PC-3 (cell line): ENCODE measurements at regions of chr1 and their contacts with region 1.

Region 1: DNA sequence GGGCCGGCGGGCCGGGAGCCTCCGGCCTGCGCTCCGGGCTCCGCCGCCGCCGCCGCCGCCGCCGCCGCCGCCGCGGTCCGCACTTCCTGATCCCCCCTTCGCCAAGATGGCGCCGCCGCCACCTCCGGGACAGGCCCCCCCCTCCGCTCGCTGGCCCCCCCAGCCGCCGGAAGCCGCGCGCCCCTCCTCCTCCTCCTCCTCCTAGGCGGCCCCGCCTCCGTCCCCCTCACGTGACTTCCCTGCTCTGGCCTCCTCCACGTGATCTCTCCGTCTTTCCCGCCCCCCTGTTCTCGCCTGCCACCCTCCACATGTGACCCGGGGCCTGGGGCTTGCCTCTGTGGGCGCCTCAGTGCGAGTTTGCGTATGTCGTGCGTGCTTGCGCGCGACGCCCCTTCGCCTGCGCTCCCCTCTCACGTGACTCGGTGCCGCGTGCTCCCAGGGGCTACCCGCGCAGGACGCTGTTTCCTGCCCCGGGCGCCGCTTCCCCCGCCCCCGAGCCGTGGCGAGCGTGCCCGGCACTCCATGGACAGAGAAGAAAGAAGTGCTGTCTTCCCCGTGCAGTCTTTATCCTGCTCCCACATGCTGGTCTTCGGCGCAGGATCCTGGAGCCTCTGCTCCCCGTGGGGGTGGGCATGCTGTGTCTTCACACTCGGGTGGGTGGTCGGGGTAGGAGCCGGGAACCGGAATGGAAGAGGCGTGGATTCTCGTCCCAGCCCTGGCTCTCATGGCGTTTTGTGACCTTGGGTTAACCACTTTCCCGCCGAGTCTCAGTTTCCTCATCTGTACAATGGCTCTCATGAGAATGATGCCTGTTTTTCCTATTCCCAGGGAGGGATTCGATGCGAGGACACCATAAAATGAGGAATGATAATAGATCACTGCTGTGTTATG is at the start of gene UBE2Q1:
- DNase-seq: peak; percentile 97
- ATAC-seq: peak; percentile 90
- H3K4me3 ChIP-seq: peak within 1 kb of the TSS; percentile 80
- H3K27ac ChIP-seq: peak within 1 kb of the TSS; percentile 74
- H3K4me1 ChIP-seq: peaks cover 24% of the 10 kb centered on the region
- H3K27me3 ChIP-seq: no peaks in the 10 kb centered on the region
- CTCF ChIP-seq: no peak
- total RNA-seq, gene UBE2Q1: 40.0 and 66.6 TPM in 2 replicates

Region 2: GRCh38 chr1:154198756-154199562 is 359.9 kb before region 1 on chr1:
- CTCF ChIA-PET with region 1: no interaction called
- POLR2A ChIA-PET with region 1: no interaction called
- intact Hi-C with region 1: no loop called
- DNase-seq: peak; percentile 84
- ATAC-seq: peak; percentile 84
- H3K4me3 ChIP-seq: peak overlapping the region; percentile 29; the same call in 1 of the 2 replicates
- H3K27ac ChIP-seq: no peak overlapping the region
- H3K4me1 ChIP-seq: peaks cover 10% of the 10 kb centered on the region; the same call in 1 of the 2 replicates
- H3K27me3 ChIP-seq: peaks cover 5% of the 10 kb centered on the region; the same call in 1 of the 2 replicates
- CTCF ChIP-seq: peak; percentile 84

Region 3: GRCh38 chr1:154404984-154405761 is 153.6 kb before region 1 on chr1 and contains the start of gene IL6R:
- CTCF ChIA-PET with region 1: no interaction called
- POLR2A ChIA-PET with region 1: no interaction called
- intact Hi-C with region 1: loop called (anchors 5 kb)
- DNase-seq: peak; percentile 98
- ATAC-seq: peak; percentile 88
- H3K4me3 ChIP-seq: peak within 1 kb of the TSS; percentile 93
- H3K27ac ChIP-seq: peak within 1 kb of the TSS; percentile 93
- H3K4me1 ChIP-seq: peaks cover 30% of the 10 kb centered on the region
- H3K27me3 ChIP-seq: no peaks in the 10 kb centered on the region
- CTCF ChIP-seq: peak; percentile 75
- total RNA-seq, gene IL6R: 16.1 and 43.3 TPM in 2 replicates

Region 4: DNA sequence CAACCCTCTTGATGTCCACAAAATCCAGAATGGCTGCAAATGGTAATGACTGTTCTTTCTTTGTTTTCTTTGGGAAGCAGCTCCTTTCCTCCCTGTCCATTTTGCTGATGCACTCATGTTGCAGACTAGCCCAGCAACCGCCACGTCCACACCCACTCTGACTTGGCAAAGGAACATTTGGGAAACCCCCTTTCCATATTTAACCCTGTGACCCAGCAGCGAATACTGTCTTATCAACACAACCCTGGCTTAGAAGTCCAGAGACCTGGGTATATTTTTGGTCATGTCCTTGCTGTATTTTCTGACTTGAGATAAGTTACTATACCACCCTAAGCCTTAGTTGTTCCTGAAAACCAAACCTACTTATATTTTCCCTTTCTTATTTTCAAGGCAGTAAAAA is 38.5 kb before region 1 on chr1:
- CTCF ChIA-PET with region 1: no interaction called
- POLR2A ChIA-PET with region 1: no interaction called
- intact Hi-C with region 1: no loop called
- DNase-seq: no peak
- ATAC-seq: no peak
- H3K4me3 ChIP-seq: no peak overlapping the region
- H3K27ac ChIP-seq: no peak overlapping the region
- H3K4me1 ChIP-seq: no peaks in the 10 kb centered on the region
- H3K27me3 ChIP-seq: peaks cover 46% of the 10 kb centered on the region
- CTCF ChIP-seq: no peak

Region 5: GRCh38 chr1:154669464-154670282 is 110.9 kb after region 1 on chr1:
- CTCF ChIA-PET with region 1: interaction called, 5 read pairs
- POLR2A ChIA-PET with region 1: no interaction called
- intact Hi-C with region 1: loop called (anchors 1 kb)
- DNase-seq: peak; percentile 91
- ATAC-seq: peak; percentile 100
- H3K4me3 ChIP-seq: no peak overlapping the region
- H3K27ac ChIP-seq: no peak overlapping the region
- H3K4me1 ChIP-seq: no peaks in the 10 kb centered on the region
- H3K27me3 ChIP-seq: peaks cover 6% of the 10 kb centered on the region; the same call in 1 of the 2 replicates
- CTCF ChIP-seq: peak; percentile 97

Region 6: GRCh38 chr1:154760469-154760933 is 201.7 kb after region 1 on chr1:
- CTCF ChIA-PET with region 1: interaction called, 3 read pairs
- POLR2A ChIA-PET with region 1: no interaction called
- intact Hi-C with region 1: loop called (anchors 2 kb)
- DNase-seq: peak; percentile 56
- ATAC-seq: peak; percentile 89
- H3K4me3 ChIP-seq: no peak overlapping the region
- H3K27ac ChIP-seq: no peak overlapping the region
- H3K4me1 ChIP-seq: no peaks in the 10 kb centered on the region
- H3K27me3 ChIP-seq: peaks cover 44% of the 10 kb centered on the region
- CTCF ChIP-seq: peak; percentile 79

Region 7: GRCh38 chr1:154936555-154937084 is 377.8 kb after region 1 on chr1 and contains the start of gene PMVK:
- CTCF ChIA-PET with region 1: interaction called, 3 read pairs
- POLR2A ChIA-PET with region 1: interaction called, 14 read pairs
- intact Hi-C with region 1: loop called (anchors 2 kb)
- DNase-seq: peak; percentile 94
- ATAC-seq: peak; percentile 72
- H3K4me3 ChIP-seq: peak within 1 kb of the TSS; percentile 67
- H3K27ac ChIP-seq: peak within 1 kb of the TSS; percentile 93
- H3K4me1 ChIP-seq: peaks cover 45% of the 10 kb centered on the region
- H3K27me3 ChIP-seq: no peaks in the 10 kb centered on the region
- CTCF ChIP-seq: peak; percentile 53
- total RNA-seq, gene PMVK: 32.3 and 41.5 TPM in 2 replicates